MCF 10A (cell line): ENCODE measurements at regions of chr1 and their contacts with region 1.

Region 1: GRCh38 chr1:246753670-246754535 is 29.7 kb downstream of the SCCPDH start:
- DNase-seq: peak; percentile 85
- H3K4me3 Mint-ChIP-seq: no peak overlapping the region
- H3K27ac Mint-ChIP-seq: no peak overlapping the region
- H3K4me1 Mint-ChIP-seq: peaks cover 10% of the 10 kb centered on the region
- H3K27me3 Mint-ChIP-seq: no peaks in the 10 kb centered on the region
- CTCF ChIP-seq: peak; percentile 98

Region 2: DNA sequence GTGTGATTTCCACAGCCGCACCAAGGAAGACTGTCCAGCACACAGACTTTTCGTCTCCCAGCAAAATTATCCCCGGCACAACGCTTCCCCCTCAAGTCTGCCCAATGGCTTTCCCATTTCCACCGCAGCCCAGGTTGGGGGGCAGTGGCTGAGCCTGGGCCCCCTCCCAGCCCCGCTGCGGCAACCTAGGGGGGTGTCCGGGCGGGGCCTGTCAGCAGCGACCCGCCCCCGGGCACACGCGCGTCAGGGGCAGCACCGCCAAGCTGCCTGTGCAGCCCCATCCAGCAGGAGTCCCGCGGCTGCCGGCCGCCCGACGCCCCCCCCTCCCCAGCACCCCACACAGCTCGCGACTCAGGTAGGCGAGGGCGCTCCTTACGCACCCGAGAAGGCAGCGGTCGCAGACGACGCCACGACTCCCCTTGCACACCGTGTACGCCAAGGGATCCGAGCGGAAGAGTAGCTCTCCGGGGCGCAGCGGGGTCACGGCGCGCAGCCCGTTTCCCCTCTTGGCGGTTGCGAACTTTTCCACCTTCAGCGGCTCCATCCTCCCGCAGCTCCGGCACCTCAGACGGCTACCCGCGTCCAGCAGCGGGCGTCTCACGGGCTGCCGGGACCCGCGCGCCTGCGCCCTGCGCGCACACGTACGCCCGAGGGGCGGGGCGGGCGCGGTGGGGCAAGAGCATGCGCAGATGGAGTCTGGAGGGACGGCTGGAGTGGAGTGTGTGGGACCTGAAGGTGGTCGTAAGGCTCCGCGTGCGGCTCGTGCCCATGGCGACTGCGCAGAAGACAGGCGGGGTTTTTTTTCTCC is 247.0 kb before region 1 on chr1 and contains the start of gene SMYD3:
- CTCF ChIA-PET with region 1: interaction called, 11 read pairs
- POLR2A ChIA-PET with region 1: no interaction called
- intact Hi-C with region 1: no loop called
- DNase-seq: peak; percentile 89
- H3K4me3 Mint-ChIP-seq: peak within 1 kb of the TSS; percentile 76
- H3K27ac Mint-ChIP-seq: peak within 1 kb of the TSS; percentile 18
- H3K4me1 Mint-ChIP-seq: peaks cover 35% of the 10 kb centered on the region
- H3K27me3 Mint-ChIP-seq: no peaks in the 10 kb centered on the region
- CTCF ChIP-seq: no peak
- total RNA-seq, gene SMYD3: 21.4 and 26.9 TPM in 2 replicates

Region 3: GRCh38 chr1:246608616-246609376 is 145.1 kb before region 1 on chr1:
- CTCF ChIA-PET with region 1: no interaction called
- POLR2A ChIA-PET with region 1: no interaction called
- intact Hi-C with region 1: loop called (anchors 2 kb)
- DNase-seq: peak; percentile 99
- H3K4me3 Mint-ChIP-seq: peak overlapping the region; percentile 66
- H3K27ac Mint-ChIP-seq: peak overlapping the region; percentile 95
- H3K4me1 Mint-ChIP-seq: peaks cover 39% of the 10 kb centered on the region
- H3K27me3 Mint-ChIP-seq: no peaks in the 10 kb centered on the region
- CTCF ChIP-seq: no peak

Region 4: GRCh38 chr1:246699095-246699735 is 54.7 kb before region 1 on chr1:
- CTCF ChIA-PET with region 1: interaction called, 464 read pairs
- POLR2A ChIA-PET with region 1: no interaction called
- intact Hi-C with region 1: loop called (anchors 2 kb)
- DNase-seq: peak; percentile 98
- H3K4me3 Mint-ChIP-seq: peak overlapping the region; percentile 69
- H3K27ac Mint-ChIP-seq: peak overlapping the region; percentile 76
- H3K4me1 Mint-ChIP-seq: peaks cover 14% of the 10 kb centered on the region
- H3K27me3 Mint-ChIP-seq: no peaks in the 10 kb centered on the region
- CTCF ChIP-seq: peak; percentile 96

Region 5: GRCh38 chr1:246724016-246724730 is 29.7 kb before region 1 on chr1 and contains the start of gene SCCPDH:
- CTCF ChIA-PET with region 1: interaction called, 10 read pairs
- POLR2A ChIA-PET with region 1: interaction called, 7 read pairs
- intact Hi-C with region 1: no loop called
- DNase-seq: peak; percentile 63
- H3K4me3 Mint-ChIP-seq: peak within 1 kb of the TSS; percentile 79
- H3K27ac Mint-ChIP-seq: peak within 1 kb of the TSS; percentile 8
- H3K4me1 Mint-ChIP-seq: peaks cover 10% of the 10 kb centered on the region
- H3K27me3 Mint-ChIP-seq: no peaks in the 10 kb centered on the region
- CTCF ChIP-seq: no peak
- total RNA-seq, gene SCCPDH: 28.4 and 32.2 TPM in 2 replicates

Region 6: GRCh38 chr1:246742396-246742795 is 11.5 kb before region 1 on chr1:
- CTCF ChIA-PET with region 1: interaction called, 39 read pairs
- POLR2A ChIA-PET with region 1: no interaction called
- intact Hi-C with region 1: no loop called
- DNase-seq: no peak
- H3K4me3 Mint-ChIP-seq: no peak overlapping the region
- H3K27ac Mint-ChIP-seq: no peak overlapping the region
- H3K4me1 Mint-ChIP-seq: no peaks in the 10 kb centered on the region
- H3K27me3 Mint-ChIP-seq: no peaks in the 10 kb centered on the region
- CTCF ChIP-seq: no peak

Region 7: DNA sequence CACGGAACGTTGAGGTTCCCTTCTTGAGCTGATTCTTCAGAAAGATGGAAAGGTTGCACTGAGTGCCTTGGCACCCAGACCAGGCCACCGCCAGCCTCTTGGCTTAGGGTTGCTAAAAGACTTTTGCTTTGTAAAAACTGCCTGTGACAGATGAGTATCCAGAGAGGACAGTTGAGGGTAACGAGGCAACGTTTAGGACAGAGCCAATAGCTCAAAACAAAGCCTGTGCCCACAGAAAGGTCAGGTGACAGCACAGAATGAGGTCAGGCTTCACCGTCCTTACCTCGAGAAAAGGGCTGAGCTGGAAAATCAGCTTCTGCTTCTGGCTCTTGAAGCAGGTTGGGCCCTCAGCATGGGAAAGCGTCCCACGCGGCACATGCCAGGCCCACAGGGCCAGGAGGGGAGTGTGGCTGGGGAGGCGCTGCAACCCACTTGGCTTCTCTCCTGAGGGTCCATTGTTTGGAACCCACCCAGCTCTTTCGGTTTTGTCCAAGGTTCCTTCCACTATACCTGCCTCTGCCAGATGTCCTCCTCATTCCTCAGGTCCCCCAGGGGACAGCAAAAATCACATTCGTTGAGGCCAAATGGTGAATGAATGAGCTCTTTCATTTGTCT is 25.8 kb after region 1 on chr1:
- CTCF ChIA-PET with region 1: interaction called, 16 read pairs
- POLR2A ChIA-PET with region 1: no interaction called
- intact Hi-C with region 1: no loop called
- DNase-seq: no peak
- H3K4me3 Mint-ChIP-seq: no peak overlapping the region
- H3K27ac Mint-ChIP-seq: no peak overlapping the region
- H3K4me1 Mint-ChIP-seq: no peaks in the 10 kb centered on the region
- H3K27me3 Mint-ChIP-seq: no peaks in the 10 kb centered on the region
- CTCF ChIP-seq: no peak